MCF 10A (cell line): ENCODE measurements at regions of chr9 and their contacts with region 1.

Region 1: GRCh38 chr9:98974994-98975712 is 31.4 kb downstream of the COL15A1 start:
- DNase-seq: peak; percentile 70
- H3K4me3 Mint-ChIP-seq: no peak overlapping the region
- H3K27ac Mint-ChIP-seq: no peak overlapping the region
- H3K4me1 Mint-ChIP-seq: no peaks in the 10 kb centered on the region
- H3K27me3 Mint-ChIP-seq: peaks cover 29% of the 10 kb centered on the region
- CTCF ChIP-seq: peak; percentile 93

Region 2: GRCh38 chr9:98807070-98807810 is 167.9 kb before region 1 on chr9 and contains the start of gene GALNT12:
- CTCF ChIA-PET with region 1: interaction called, 13 read pairs
- POLR2A ChIA-PET with region 1: no interaction called
- intact Hi-C with region 1: no loop called
- DNase-seq: no peak
- H3K4me3 Mint-ChIP-seq: peak within 1 kb of the TSS; percentile 14
- H3K27ac Mint-ChIP-seq: no peak within 1 kb of the TSS
- H3K4me1 Mint-ChIP-seq: peaks cover 39% of the 10 kb centered on the region
- H3K27me3 Mint-ChIP-seq: peaks cover 39% of the 10 kb centered on the region
- CTCF ChIP-seq: no peak
- total RNA-seq, gene GALNT12: not detected in 2 replicates

Region 3: GRCh38 chr9:98860871-98861293 is 114.3 kb before region 1 on chr9:
- CTCF ChIA-PET with region 1: interaction called, 6 read pairs
- POLR2A ChIA-PET with region 1: no interaction called
- intact Hi-C with region 1: loop called (anchors 1 kb)
- DNase-seq: peak; percentile 86
- H3K4me3 Mint-ChIP-seq: no peak overlapping the region
- H3K27ac Mint-ChIP-seq: no peak overlapping the region
- H3K4me1 Mint-ChIP-seq: peaks cover 7% of the 10 kb centered on the region
- H3K27me3 Mint-ChIP-seq: peaks cover 26% of the 10 kb centered on the region
- CTCF ChIP-seq: peak; percentile 16

Region 4: DNA sequence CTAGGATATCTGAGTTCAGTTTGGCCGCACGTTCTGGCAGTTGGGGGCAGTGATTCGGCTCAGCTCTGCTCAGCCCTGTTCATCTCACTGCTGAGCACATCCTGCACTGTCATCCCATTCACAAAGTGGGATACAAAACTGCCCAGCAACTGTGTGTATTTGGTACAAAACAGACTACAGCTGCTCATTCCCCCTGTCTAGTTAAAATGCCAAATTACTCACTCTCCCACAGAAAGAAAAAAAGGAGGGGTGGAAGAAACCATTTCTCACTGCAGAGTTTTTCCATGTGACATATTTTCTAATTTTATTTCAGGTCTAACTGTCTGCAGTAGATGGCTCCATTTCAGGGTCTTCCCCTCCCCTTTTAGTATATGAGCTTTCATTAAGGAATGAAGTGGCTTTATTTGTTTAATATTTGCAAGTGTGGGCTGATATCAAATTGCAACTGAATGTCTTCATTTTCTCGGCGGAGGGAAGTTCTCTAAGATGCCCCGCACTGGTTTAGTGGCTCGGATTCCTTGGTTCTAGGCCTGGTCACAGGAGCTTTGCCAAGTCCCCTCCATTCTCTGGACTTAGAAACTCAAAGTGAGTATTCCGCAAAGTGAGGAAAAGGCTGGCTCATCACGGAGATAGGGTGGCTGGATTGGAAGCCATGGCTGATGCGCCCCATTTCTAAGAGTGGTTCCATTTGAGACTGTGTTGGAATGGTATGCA is 16.7 kb before region 1 on chr9:
- CTCF ChIA-PET with region 1: interaction called, 20 read pairs
- POLR2A ChIA-PET with region 1: no interaction called
- intact Hi-C with region 1: no loop called
- DNase-seq: no peak
- H3K4me3 Mint-ChIP-seq: no peak overlapping the region
- H3K27ac Mint-ChIP-seq: no peak overlapping the region
- H3K4me1 Mint-ChIP-seq: no peaks in the 10 kb centered on the region
- H3K27me3 Mint-ChIP-seq: peaks cover 40% of the 10 kb centered on the region
- CTCF ChIP-seq: no peak

Region 5: GRCh38 chr9:98989036-98990000 is 14.2 kb after region 1 on chr9:
- CTCF ChIA-PET with region 1: interaction called, 96 read pairs
- POLR2A ChIA-PET with region 1: no interaction called
- intact Hi-C with region 1: no loop called
- DNase-seq: peak; percentile 95
- H3K4me3 Mint-ChIP-seq: no peak overlapping the region
- H3K27ac Mint-ChIP-seq: no peak overlapping the region
- H3K4me1 Mint-ChIP-seq: peaks cover 18% of the 10 kb centered on the region
- H3K27me3 Mint-ChIP-seq: peaks cover 11% of the 10 kb centered on the region
- CTCF ChIP-seq: no peak